Common myeloid progenitor, CD34-positive (primary cell): ENCODE measurements at regions of chr12 and their contacts with region 1.

Region 1: GRCh38 chr12:71746983-71747611 is 7.6 kb upstream of the RAB21 start:
- DNase-seq: peak; percentile 59 to 77 (median 74)
- H3K4me3 ChIP-seq: no peak overlapping the region
- H3K27ac ChIP-seq: no peak overlapping the region
- H3K4me1 ChIP-seq: no peaks in the 10 kb centered on the region
- H3K27me3 ChIP-seq: peaks cover 0 to 3% (median 0%) of the 10 kb centered on the region in 5 experiments

Region 2: GRCh38 chr12:71415336-71416231 is 331.5 kb before region 1 on chr12:
- CTCF ChIA-PET with region 1: interaction called, 20 read pairs
- POLR2A ChIA-PET with region 1: no interaction called
- DNase-seq: peak; percentile 50 to 69 (median 60)
- H3K4me3 ChIP-seq: no peak overlapping the region
- H3K27ac ChIP-seq: no peak overlapping the region
- H3K4me1 ChIP-seq: no peaks in the 10 kb centered on the region
- H3K27me3 ChIP-seq: no peaks in the 10 kb centered on the region

Region 3: GRCh38 chr12:71551529-71551928 is 195.6 kb before region 1 on chr12:
- CTCF ChIA-PET with region 1: interaction called, 10 read pairs
- POLR2A ChIA-PET with region 1: no interaction called
- DNase-seq: peak; percentile 44 to 62 (median 58)
- H3K4me3 ChIP-seq: peak overlapping the region in 2 of 7 experiments; percentile 11 to 26
- H3K27ac ChIP-seq: no peak overlapping the region
- H3K4me1 ChIP-seq: peaks cover 0 to 10% (median 3%) of the 10 kb centered on the region in 4 experiments
- H3K27me3 ChIP-seq: no peaks in the 10 kb centered on the region

Region 4: GRCh38 chr12:71636704-71637115 is 110.4 kb before region 1 on chr12:
- CTCF ChIA-PET with region 1: interaction called, 29 read pairs
- POLR2A ChIA-PET with region 1: no interaction called
- DNase-seq: peak; percentile 77 to 90 (median 86)
- H3K4me3 ChIP-seq: no peak overlapping the region
- H3K27ac ChIP-seq: no peak overlapping the region
- H3K4me1 ChIP-seq: no peaks in the 10 kb centered on the region
- H3K27me3 ChIP-seq: no peaks in the 10 kb centered on the region

Region 5: DNA sequence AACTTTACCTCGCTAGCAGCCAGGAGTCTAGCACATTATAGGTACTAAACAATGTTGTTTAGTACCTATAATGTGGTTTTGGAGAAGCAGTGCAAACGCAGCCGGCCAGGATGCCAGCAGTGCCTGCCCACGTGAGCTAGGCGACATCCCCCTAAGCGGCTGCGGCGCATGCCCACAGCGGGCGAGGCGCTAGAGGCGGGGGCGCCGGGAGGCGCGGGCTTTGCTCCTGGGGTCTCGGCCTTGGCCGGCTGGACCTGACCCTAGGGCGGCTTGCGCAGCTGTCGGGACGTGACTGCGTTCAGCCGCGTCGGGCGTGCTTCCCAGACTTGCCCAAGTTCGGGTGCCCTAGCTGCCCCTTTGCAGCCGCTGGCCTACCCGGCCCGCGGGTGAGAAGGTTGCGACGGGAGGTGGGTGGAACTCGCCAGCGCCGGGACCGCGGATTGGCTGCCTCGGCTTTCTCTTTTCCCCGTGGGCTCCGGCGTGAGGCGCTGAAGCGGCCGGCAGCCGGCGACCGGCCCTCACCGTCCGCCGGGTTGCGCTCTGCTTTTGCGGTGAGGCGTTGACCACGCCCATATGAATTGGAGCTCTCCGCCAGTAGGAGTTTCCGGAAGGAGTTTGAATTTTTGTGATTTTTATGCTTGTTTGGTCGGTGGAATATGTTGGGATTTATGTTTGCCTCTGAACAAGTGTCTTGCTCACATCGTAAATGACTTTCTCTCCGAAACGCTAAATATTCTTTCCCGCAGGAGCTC is 61.0 kb before region 1 on chr12 and contains the start of gene TMEM19:
- CTCF ChIA-PET with region 1: interaction called, 30 read pairs
- POLR2A ChIA-PET with region 1: no interaction called
- DNase-seq: peak; percentile 89 to 92 (median 92)
- H3K4me3 ChIP-seq: peak within 1 kb of the TSS; percentile 68 to 98 (median 86)
- H3K27ac ChIP-seq: peak within 1 kb of the TSS; percentile 75 to 83
- H3K4me1 ChIP-seq: peaks cover 9 to 36% (median 15%) of the 10 kb centered on the region in 4 experiments
- H3K27me3 ChIP-seq: no peaks in the 10 kb centered on the region